ENCODE measurements at regions of chr12 and their contacts with region 1.

Region 1: GRCh38 chr12:63843721-63844390 is 644 bp upstream of the SRGAP1 start:
- DNase-seq: peak; percentile 97
- H3K4me3 ChIP-seq: peak overlapping the region; percentile 80
- H3K27ac ChIP-seq: peak overlapping the region; percentile 82
- H3K4me1 ChIP-seq: peaks cover 3% of the 10 kb centered on the region
- H3K27me3 ChIP-seq: no peaks in the 10 kb centered on the region
- CTCF ChIP-seq: peak; percentile 92

Region 2: DNA sequence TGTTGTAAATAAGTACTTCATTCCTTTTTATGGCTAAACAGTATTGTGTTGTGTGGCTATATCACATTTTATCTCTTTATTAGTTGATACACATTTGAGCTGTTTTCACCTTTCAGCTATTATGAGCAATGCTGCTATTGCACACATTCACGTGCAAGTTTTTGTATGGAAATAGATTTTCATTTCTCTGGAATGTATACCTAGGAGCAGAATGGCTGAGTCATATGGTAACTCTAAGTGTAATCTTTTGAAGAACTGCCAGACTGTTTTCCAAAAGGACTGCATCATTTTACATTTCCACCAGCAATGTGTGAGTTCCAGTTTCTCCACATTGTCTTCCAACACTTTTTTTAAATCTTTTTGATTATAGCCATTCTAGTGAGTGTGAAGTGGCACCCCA is 134.7 kb after region 1 on chr12:
- CTCF ChIA-PET with region 1: no interaction called
- POLR2A ChIA-PET with region 1: no interaction called
- intact Hi-C with region 1: loop called (anchors 10 kb)
- DNase-seq: peak; percentile 19
- H3K4me3 ChIP-seq: no peak overlapping the region
- H3K27ac ChIP-seq: no peak overlapping the region
- H3K4me1 ChIP-seq: peaks cover 28% of the 10 kb centered on the region
- H3K27me3 ChIP-seq: no peaks in the 10 kb centered on the region
- CTCF ChIP-seq: no peak

Region 3: DNA sequence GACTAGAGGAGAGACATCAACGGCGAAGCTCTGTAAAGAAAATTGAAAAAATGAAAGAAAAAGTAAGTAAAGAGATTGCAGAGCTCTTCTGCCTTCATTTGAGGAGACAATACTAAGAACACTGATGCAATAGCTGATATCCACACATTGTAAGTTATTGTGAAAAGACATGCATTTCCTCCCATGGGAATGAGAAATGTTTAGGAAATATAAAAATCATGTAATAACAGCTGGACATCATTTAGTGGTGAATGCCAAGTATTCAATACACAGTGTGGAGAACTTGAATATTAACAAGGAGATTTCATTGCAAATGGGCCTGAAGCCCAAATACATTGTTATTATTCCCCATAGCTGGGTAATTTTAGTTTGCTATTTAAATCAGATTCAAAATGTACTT is 199.1 kb after region 1 on chr12:
- CTCF ChIA-PET with region 1: no interaction called
- POLR2A ChIA-PET with region 1: no interaction called
- intact Hi-C with region 1: loop called (anchors 2 kb)
- DNase-seq: peak; percentile 91
- H3K4me3 ChIP-seq: peak overlapping the region; percentile 33
- H3K27ac ChIP-seq: peak overlapping the region; percentile 76
- H3K4me1 ChIP-seq: peaks cover 49% of the 10 kb centered on the region
- H3K27me3 ChIP-seq: no peaks in the 10 kb centered on the region
- CTCF ChIP-seq: no peak

Region 4: DNA sequence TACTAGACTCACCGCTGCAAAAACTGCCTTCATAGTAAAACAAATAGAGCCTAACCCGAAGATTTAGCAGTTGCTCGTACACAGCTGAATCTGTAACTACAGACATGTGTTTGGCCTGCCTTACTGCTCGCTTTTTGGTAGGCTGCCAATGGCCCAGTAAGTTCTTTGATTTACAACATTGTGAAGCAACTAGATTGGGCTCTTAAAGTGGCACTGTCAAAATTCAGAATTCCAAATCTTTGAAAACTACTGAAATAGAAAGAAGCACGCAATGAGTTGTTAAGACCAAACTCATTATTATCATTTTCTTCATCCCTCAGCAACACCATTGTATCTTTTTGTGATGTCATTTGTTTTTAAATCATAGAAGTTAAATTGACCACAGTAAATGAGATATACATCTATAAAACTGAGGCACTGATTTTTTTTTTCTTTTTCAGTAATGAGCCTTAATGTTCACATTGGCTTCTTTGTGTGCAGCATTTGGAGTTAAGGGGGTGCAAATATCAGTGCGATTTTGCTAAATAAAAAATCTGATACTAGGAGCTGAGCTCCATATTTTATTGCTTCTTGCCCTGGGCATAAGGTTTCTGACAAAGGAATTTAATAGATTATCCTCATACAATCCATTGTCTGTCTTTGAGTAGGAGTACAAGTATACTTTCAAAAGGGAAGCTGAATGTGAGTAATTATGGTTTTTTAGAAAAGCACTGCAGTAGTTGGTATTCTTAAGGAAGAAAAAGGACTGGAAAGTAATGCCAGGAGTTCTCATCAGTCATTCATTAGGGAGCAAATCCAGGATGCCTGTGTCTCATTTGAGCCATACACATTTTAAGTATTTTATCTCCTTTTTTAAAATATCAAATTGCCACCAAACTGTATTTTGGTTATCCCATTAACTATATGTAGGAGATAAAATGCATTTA is 239.7 kb after region 1 on chr12:
- CTCF ChIA-PET with region 1: no interaction called
- POLR2A ChIA-PET with region 1: no interaction called
- intact Hi-C with region 1: loop called (anchors 5 kb)
- DNase-seq: peak; percentile 94
- H3K4me3 ChIP-seq: peak overlapping the region; percentile 13
- H3K27ac ChIP-seq: peak overlapping the region; percentile 64
- H3K4me1 ChIP-seq: peaks cover 50% of the 10 kb centered on the region
- H3K27me3 ChIP-seq: no peaks in the 10 kb centered on the region
- CTCF ChIP-seq: no peak

Region 5: DNA sequence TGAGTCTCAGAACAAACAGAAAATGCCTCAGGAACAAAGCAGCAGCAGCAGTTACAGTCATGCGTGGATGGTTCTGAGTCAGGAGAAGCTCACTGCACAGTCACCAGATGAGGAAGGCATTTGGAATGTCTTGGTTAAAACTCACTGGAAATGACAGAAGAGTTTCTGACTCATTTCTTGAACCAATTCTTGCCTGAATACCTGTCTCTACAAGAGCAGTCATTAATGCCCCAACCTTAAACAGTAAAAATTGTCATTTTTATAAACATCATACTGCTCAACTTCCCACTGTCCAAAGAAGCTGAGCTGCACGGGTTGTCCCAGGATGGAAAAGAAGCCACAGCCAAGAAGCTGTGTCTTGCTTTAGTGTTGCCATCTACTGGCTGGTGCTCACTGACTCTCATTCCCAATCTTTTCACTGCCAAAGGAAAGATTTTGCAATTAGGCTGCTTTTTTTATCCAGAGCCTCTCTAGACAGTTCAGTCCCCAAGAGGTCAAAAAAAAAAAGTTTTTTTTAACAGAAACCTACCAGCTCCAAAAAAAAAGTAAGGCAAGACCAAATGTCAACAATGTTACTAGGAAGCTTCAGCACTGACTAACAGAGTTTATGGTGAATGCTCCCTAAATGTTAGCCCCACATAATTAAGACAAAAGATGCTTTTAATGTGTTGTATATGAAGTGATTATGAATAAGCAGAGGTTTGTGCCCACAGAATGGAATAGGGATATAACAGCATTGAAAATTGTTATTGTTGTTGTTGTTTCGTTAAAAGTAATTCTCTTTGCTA is 337.8 kb after region 1 on chr12:
- CTCF ChIA-PET with region 1: interaction called, 12 read pairs
- POLR2A ChIA-PET with region 1: no interaction called
- intact Hi-C with region 1: loop called (anchors 1 kb)
- DNase-seq: peak; percentile 74
- H3K4me3 ChIP-seq: no peak overlapping the region
- H3K27ac ChIP-seq: no peak overlapping the region
- H3K4me1 ChIP-seq: peaks cover 12% of the 10 kb centered on the region
- H3K27me3 ChIP-seq: no peaks in the 10 kb centered on the region
- CTCF ChIP-seq: peak; percentile 85

Region 6: GRCh38 chr12:64256166-64256800 is 412.4 kb after region 1 on chr12:
- CTCF ChIA-PET with region 1: interaction called, 16 read pairs
- POLR2A ChIA-PET with region 1: no interaction called
- intact Hi-C with region 1: loop called (anchors 1 kb)
- DNase-seq: peak; percentile 79
- H3K4me3 ChIP-seq: no peak overlapping the region
- H3K27ac ChIP-seq: no peak overlapping the region
- H3K4me1 ChIP-seq: no peaks in the 10 kb centered on the region
- H3K27me3 ChIP-seq: no peaks in the 10 kb centered on the region
- CTCF ChIP-seq: peak; percentile 71